MCF 10A (cell line): ENCODE measurements at regions of chr17 and their contacts with region 1.

Region 1: DNA sequence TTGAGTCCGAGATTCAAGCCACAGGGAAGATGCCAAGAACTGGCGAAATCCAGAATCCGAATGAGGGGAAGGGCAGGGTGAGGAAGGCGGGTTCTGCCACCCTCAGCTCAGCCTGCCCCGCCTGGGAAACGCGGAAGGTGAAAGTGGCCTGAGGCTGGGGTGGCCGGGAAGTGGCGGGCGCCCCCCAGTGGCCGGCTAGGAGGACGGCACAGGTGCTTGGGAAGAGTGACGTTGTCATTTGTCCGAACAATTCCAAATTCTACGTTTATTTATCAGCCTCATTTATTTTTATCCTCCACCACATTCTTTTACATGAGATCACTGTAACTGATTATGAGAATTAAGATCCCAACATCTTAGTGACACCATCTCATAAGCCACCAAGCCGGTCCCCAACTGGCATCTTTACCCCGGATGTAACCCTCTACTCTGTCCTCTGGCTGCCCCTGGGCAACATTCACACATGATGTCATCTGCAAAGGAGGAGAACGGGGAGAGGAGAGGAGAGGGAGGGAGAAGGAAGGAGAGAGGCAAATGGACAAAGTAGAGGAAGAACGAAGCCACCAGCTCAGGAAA is 21.3 kb downstream of the SRCIN1 start:
- DNase-seq: peak; percentile 76
- H3K4me3 Mint-ChIP-seq: peak overlapping the region; percentile 26
- H3K27ac Mint-ChIP-seq: no peak overlapping the region
- H3K4me1 Mint-ChIP-seq: peaks cover 13% of the 10 kb centered on the region
- H3K27me3 Mint-ChIP-seq: no peaks in the 10 kb centered on the region
- CTCF ChIP-seq: peak; percentile 96

Region 2: DNA sequence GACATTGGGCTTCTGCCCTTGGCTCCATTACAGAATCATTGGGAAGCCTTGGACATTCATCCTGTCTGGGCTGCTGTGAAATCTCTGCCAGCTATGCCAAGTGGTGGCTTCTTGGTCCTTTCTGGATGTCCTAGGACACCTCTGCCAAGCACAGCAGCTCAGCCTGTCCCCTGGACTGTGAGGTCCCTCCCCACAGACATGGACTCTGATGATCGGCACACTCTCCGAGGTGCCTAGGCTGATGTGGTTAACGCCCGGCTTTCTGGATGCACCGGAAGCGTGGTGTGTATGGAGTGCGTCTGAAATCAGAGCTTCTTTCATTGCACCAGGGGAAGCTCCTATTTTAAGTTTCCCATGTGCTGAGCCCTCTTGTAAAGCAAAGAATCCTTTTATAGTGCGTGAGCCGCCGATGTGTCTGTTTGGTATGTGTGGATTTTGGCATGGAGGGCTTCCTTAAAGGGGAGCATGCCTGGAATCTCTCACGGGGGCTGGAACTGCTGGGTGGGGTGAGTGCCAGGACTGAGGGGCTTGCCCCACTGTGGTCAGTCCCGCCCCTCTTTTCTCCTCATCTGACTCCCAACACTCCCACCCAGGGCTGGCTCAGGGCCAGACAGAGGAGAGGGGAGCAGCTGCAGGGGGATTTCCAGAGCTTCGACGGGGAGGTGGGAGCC is 163.1 kb before region 1 on chr17:
- CTCF ChIA-PET with region 1: interaction called, 3 read pairs
- POLR2A ChIA-PET with region 1: no interaction called
- intact Hi-C with region 1: loop called (anchors 5 kb)
- DNase-seq: no peak
- H3K4me3 Mint-ChIP-seq: no peak overlapping the region
- H3K27ac Mint-ChIP-seq: no peak overlapping the region
- H3K4me1 Mint-ChIP-seq: no peaks in the 10 kb centered on the region
- H3K27me3 Mint-ChIP-seq: peaks cover 21% of the 10 kb centered on the region
- CTCF ChIP-seq: no peak

Region 3: GRCh38 chr17:38444151-38444550 is 140.3 kb before region 1 on chr17:
- CTCF ChIA-PET with region 1: no interaction called
- POLR2A ChIA-PET with region 1: no interaction called
- intact Hi-C with region 1: loop called (anchors 2 kb)
- DNase-seq: peak; percentile 80
- H3K4me3 Mint-ChIP-seq: no peak overlapping the region
- H3K27ac Mint-ChIP-seq: no peak overlapping the region
- H3K4me1 Mint-ChIP-seq: peaks cover 8% of the 10 kb centered on the region
- H3K27me3 Mint-ChIP-seq: no peaks in the 10 kb centered on the region
- CTCF ChIP-seq: peak; percentile 95

Region 4: GRCh38 chr17:38702166-38702899 is 117.9 kb after region 1 on chr17:
- CTCF ChIA-PET with region 1: no interaction called
- POLR2A ChIA-PET with region 1: no interaction called
- intact Hi-C with region 1: no loop called
- DNase-seq: peak; percentile 88
- H3K4me3 Mint-ChIP-seq: peak overlapping the region; percentile 99
- H3K27ac Mint-ChIP-seq: peak overlapping the region; percentile 75
- H3K4me1 Mint-ChIP-seq: peaks cover 17% of the 10 kb centered on the region
- H3K27me3 Mint-ChIP-seq: peaks cover 10% of the 10 kb centered on the region
- CTCF ChIP-seq: no peak

Region 5: DNA sequence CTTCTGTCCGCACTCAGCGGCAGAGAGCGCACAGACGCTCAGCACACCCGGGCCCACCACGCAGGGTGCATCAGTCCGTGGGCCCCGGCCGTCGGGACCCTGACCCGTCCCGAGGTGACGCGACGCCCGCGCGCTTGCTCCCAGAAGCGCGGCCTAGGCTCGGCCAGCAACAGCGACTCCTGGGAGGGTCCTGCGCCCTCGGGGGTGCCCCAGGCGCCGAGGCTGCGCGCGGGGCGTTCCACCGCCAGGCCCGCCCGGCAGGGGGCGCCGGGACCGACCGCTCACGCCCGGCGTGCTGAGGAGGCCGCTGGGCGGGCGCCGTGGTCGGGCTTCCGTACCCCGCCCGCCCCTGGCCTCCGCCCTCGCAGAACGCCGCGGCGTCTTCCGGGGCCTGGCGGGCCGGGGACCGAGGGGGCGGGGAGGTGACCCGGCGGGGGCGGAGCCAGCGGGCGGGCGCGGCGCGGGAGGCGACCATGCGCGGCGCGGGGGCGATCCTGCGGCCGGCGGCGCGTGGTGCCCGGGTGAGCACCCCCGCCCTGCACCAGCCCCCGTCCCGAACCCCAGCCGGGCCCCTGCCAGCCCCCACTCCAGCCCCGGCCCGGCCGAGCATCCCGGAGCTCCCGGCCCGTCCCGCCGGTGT is 145.6 kb after region 1 on chr17 and contains the start of gene CISD3:
- CTCF ChIA-PET with region 1: no interaction called
- POLR2A ChIA-PET with region 1: no interaction called
- intact Hi-C with region 1: no loop called
- DNase-seq: peak; percentile 81
- H3K4me3 Mint-ChIP-seq: peak within 1 kb of the TSS; percentile 87
- H3K27ac Mint-ChIP-seq: peak within 1 kb of the TSS; percentile 87
- H3K4me1 Mint-ChIP-seq: peaks cover 18% of the 10 kb centered on the region
- H3K27me3 Mint-ChIP-seq: no peaks in the 10 kb centered on the region
- CTCF ChIP-seq: peak; percentile 41
- total RNA-seq, gene CISD3: 36.8 and 42.0 TPM in 2 replicates

Region 6: DNA sequence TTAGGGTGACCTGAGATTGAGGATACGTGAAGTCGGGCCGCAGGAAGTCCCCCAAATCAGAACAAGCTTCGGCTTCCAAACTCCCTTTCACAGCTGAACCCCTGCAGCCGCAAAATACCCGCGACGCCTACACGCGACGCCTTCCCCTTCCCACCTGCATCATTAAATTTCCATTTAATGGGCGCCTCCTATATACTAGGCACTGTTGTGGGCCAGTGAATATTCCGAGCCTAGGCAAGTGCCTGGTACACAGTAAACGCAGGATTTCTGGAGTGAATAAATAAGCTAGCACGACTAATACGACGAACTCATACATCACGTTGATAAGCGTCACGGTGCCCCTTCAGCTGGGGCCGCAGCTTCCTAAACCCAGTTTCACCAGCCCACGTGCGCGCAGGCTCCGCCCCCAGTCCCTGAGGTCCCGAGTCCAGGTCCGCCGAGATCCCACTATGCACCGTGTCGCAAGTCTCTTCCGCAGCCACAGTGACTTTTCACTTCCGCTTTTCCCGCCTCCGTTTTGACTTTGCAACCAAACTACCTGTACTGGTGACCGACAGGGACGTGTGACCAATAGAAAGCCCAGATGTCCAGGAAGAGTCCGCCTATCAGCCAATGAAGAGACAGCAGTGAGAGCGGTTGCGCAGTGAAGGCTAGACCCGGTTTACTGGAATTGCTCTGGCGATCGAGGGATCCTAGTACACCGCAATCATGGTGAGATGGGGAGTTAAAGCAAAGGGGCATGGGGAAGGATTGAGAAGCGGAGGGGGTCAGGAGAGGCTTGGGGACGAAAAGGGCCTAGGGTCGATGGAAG is 167.9 kb after region 1 on chr17 and contains the start of gene PSMB3:
- CTCF ChIA-PET with region 1: no interaction called
- POLR2A ChIA-PET with region 1: no interaction called
- intact Hi-C with region 1: no loop called
- DNase-seq: peak; percentile 99
- H3K4me3 Mint-ChIP-seq: peak within 1 kb of the TSS; percentile 96
- H3K27ac Mint-ChIP-seq: peak within 1 kb of the TSS; percentile 98
- H3K4me1 Mint-ChIP-seq: peaks cover 28% of the 10 kb centered on the region
- H3K27me3 Mint-ChIP-seq: no peaks in the 10 kb centered on the region
- CTCF ChIP-seq: no peak
- total RNA-seq, gene PSMB3: 124 and 145 TPM in 2 replicates

Region 7: GRCh38 chr17:39461113-39461925 is 876.9 kb after region 1 on chr17 and contains the start of gene CDK12:
- CTCF ChIA-PET with region 1: no interaction called
- POLR2A ChIA-PET with region 1: no interaction called
- intact Hi-C with region 1: no loop called
- DNase-seq: peak; percentile 100
- H3K4me3 Mint-ChIP-seq: peak within 1 kb of the TSS; percentile 89
- H3K27ac Mint-ChIP-seq: peak within 1 kb of the TSS; percentile 98
- H3K4me1 Mint-ChIP-seq: peaks cover 6% of the 10 kb centered on the region
- H3K27me3 Mint-ChIP-seq: no peaks in the 10 kb centered on the region
- CTCF ChIP-seq: no peak
- total RNA-seq, gene CDK12: 71.1 and 71.3 TPM in 2 replicates